Gastrocnemius medialis (tissue), 4 donors: ENCODE measurements at regions of chr6 and their contacts with region 1.

Region 1: GRCh38 chr6:17289630-17290061 is 8.5 kb downstream of the RBM24 start:
- DNase-seq: peak; percentile 96 to 99
- ATAC-seq: peak; percentile 85 to 87
- H3K4me3 ChIP-seq: peak overlapping the region; percentile 38 to 94 (median 62)
- H3K27ac ChIP-seq: peak overlapping the region; percentile 93 to 100 (median 96)
- H3K4me1 ChIP-seq: peaks cover 23 to 81% of the 10 kb centered on the region in 2 donors
- H3K27me3 ChIP-seq: no peaks in the 10 kb centered on the region
- CTCF ChIP-seq: peak in 1 of 5 experiments; percentile 16
- POLR2A ChIP-seq: peak; percentile 64 to 83

Region 2: DNA sequence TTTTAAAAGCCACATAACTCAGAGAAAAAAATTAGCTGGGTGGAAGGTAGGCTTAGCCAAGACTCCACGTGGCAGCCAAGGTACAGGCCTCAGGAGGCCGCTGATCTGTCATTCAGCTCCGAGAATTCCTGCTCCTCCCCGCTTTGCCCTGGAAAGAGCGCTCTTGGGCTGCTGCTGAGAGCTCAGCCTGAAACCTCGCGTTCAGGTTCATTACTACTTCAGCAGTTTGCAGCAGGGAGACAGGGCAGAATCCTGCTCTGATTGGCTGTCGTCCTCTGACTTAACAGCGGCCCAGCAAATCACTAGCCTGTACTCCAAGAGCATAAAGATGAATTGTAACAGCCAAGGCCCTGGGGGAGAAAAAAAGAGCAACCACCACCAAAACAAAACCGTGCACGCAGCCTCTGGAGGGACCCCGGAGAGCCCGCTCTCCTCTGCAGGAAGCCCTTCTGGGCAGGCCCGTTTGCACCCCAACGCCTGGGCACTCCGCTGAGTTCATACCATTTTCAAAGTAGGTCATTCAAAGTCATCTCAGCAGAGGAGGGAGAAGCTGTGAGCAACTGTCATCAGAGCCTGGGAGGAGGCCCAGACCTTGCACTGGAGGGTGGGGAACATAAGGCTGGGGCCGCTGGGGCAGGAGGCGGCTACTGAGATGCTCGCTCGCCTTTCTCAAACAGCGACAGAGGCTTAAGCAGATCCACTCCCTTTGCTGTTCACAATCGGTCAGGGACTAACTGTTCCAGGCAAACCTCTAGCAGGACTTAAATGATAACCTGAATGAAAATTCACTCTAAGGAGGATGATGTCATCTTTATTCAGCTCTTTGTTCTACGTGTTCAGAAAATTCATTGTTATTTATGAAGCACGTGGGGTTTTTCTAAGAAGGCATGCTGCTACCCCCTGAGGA is 486.1 kb before region 1 on chr6:
- in situ Hi-C with region 1: no loop called
- intact Hi-C with region 1: no loop called
- DNase-seq: no peak
- ATAC-seq: no peak
- H3K4me3 ChIP-seq: no peak overlapping the region
- H3K27ac ChIP-seq: no peak overlapping the region
- H3K4me1 ChIP-seq: peaks cover 22 to 25% of the 10 kb centered on the region in 2 donors
- H3K27me3 ChIP-seq: no peaks in the 10 kb centered on the region
- CTCF ChIP-seq: no peak
- POLR2A ChIP-seq: no peak

Region 3: DNA sequence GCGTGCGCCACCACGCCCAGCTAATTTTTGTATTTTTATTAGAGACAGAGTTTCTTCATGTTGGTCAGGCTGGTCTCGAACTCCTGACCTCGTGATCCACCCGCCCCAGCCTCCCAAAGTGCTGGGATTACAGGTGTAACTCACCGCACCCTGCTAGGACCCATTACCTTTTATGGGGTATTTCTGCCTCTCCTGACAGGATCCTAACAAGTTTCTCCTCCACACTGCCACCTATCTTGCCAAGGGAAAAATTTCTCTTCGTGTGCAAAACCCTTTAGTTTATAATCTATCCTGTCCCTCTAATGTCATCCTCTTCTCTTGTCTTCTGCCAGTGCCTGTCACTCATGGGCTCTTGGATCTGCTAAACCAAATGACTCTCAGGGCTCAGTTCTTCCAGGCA is 185.9 kb before region 1 on chr6:
- in situ Hi-C with region 1: no loop called
- intact Hi-C with region 1: no loop called
- DNase-seq: no peak
- ATAC-seq: no peak
- H3K4me3 ChIP-seq: no peak overlapping the region
- H3K27ac ChIP-seq: no peak overlapping the region
- H3K4me1 ChIP-seq: no peaks in the 10 kb centered on the region
- H3K27me3 ChIP-seq: peaks cover 0 to 11% (median 0%) of the 10 kb centered on the region in 3 donors
- CTCF ChIP-seq: no peak
- POLR2A ChIP-seq: no peak

Region 4: DNA sequence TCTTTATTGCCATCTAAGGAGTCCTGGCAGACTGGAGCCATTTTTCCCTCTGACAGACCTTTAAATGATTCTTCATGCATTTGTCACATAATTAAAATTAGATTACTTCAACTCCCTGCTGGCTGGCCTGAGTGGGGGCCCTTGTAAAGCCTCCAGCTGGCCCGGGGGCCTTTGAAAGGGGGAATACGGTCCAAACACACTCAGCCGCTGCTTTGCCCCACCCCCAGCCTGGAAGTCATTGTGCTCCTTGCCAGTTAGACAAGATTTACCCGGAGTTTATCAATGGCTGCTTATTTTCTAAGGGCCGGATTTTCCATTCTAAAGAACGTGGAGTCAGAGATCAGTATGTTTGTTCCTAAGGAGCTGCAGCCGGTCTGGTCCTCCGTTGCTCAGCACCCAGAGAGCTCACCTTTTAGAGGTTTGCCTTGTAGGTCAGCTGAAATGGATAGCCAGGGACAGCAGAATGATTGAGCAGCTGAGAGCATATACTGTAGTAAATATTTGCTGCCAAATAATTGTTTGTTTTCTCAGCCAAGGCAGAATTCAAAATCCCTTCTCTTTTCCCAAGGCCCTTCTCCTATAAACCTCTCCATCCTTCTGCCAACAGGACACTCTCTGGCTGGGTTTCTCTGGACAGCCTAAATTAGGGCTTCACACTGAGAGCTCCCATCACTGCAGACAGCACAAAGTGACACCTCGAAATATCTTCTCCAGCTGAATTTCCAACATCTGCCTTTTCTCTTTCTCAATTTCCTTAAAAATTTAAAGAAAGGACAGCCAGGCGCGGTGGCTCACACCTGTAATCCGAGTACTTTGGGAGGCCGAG is 76.9 kb before region 1 on chr6:
- in situ Hi-C with region 1: no loop called
- intact Hi-C with region 1: no loop called
- DNase-seq: peak; percentile 24 to 70
- ATAC-seq: peak; percentile 70 to 71
- H3K4me3 ChIP-seq: peak overlapping the region in 2 of 4 donors; percentile 5
- H3K27ac ChIP-seq: peak overlapping the region; percentile 79 to 90 (median 88)
- H3K4me1 ChIP-seq: peaks cover 22 to 29% of the 10 kb centered on the region in 2 donors
- H3K27me3 ChIP-seq: no peaks in the 10 kb centered on the region
- CTCF ChIP-seq: no peak
- POLR2A ChIP-seq: no peak

Region 5: DNA sequence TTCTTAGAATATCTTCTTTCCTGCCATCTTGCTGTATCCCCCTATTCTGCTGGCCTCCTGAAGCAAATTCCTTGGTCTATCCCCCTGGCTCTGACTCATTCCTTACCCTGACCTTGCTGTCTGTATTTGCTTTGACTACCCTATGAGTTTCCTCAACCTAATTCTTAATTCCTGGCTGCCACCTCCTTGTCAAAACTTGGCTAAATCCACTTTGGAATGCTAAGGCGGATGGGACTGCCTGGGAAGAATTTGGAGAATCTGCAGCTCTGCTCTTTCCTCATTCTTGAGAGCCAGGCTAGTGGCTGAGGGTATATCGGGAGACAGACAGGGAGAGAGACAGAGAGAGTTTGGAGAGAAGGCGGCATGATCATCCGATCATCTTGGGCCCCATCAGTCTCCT is 128.2 kb after region 1 on chr6:
- in situ Hi-C with region 1: no loop called
- intact Hi-C with region 1: loop called (anchors 1 kb)
- DNase-seq: no peak
- ATAC-seq: peak in 1 of 2 donors; percentile 21
- H3K4me3 ChIP-seq: peak overlapping the region in 3 of 4 donors; percentile 8 to 24 (median 10)
- H3K27ac ChIP-seq: peak overlapping the region; percentile 96 to 98 (median 96)
- H3K4me1 ChIP-seq: peaks cover 65 to 72% of the 10 kb centered on the region in 2 donors
- H3K27me3 ChIP-seq: no peaks in the 10 kb centered on the region
- CTCF ChIP-seq: no peak
- POLR2A ChIP-seq: no peak

Region 6: GRCh38 chr6:17429383-17430061 is 139.9 kb after region 1 on chr6:
- in situ Hi-C with region 1: no loop called
- intact Hi-C with region 1: no loop called
- DNase-seq: peak; percentile 76 to 81
- ATAC-seq: peak; percentile 85 to 86
- H3K4me3 ChIP-seq: no peak overlapping the region
- H3K27ac ChIP-seq: peak overlapping the region; percentile 96 to 98 (median 96)
- H3K4me1 ChIP-seq: peaks cover 48 to 52% of the 10 kb centered on the region in 2 donors
- H3K27me3 ChIP-seq: no peaks in the 10 kb centered on the region
- CTCF ChIP-seq: no peak
- POLR2A ChIP-seq: peak; percentile 73 to 87